Dorsolateral prefrontal cortex (tissue), 120 donors: ENCODE measurements at regions of chr6 and their contacts with region 1.

Region 1: GRCh38 chr6:98845211-98846020 is 11.0 kb downstream of the POU3F2 start:
- DNase-seq: peak; percentile 75 to 96 (median 90)
- H3K4me3 ChIP-seq: peak overlapping the region; percentile 35 to 89 (median 71)
- H3K27ac ChIP-seq: peak overlapping the region; percentile 66 to 99 (median 96)
- H3K27me3 ChIP-seq: peaks cover 0 to 33% (median 0%) of the 10 kb centered on the region in 45 donors
- CTCF ChIP-seq: peak; percentile 70 to 93 (median 86)

Region 2: DNA sequence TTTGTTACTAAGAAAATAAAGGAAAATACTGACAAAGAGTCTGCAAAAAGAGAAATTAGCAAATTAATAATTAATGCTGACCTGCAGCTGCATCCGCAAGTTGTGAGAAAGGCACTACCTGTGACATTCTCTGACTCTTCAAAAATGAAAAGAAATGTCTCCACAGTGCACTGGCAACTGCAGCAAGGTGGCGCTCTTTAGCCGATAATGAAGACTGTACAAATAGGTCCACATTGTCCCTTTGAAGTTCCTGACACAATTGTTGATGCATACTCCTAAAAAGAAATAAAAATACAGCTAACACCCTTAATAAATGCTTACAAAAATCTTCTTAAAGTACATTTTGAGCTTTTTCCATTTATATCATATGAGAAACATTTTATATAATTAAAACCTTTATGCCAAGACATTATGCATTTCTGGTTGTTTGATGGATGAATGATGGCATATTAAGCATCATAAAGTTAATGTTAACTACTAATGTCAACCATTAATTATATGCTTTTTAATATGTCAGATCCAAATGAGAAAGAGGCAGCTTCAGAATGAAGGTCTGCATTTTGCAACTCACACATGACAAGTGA is 1658.9 kb before region 1 on chr6:
- intact Hi-C with region 1: loop called (anchors 5 to 10 kb)
- DNase-seq: peak; percentile 37 to 88 (median 64)
- H3K4me3 ChIP-seq: no peak overlapping the region
- H3K27ac ChIP-seq: no peak overlapping the region
- H3K27me3 ChIP-seq: no peaks in the 10 kb centered on the region
- CTCF ChIP-seq: peak; percentile 80 to 99 (median 92)

Region 3: GRCh38 chr6:97705568-97705967 is 1139.8 kb before region 1 on chr6:
- intact Hi-C with region 1: loop called (anchors 2 to 10 kb)
- DNase-seq: no peak
- H3K4me3 ChIP-seq: no peak overlapping the region
- H3K27ac ChIP-seq: no peak overlapping the region
- H3K27me3 ChIP-seq: no peaks in the 10 kb centered on the region
- CTCF ChIP-seq: peak; percentile 20 to 73 (median 54)

Region 4: GRCh38 chr6:98039869-98040607 is 805.4 kb before region 1 on chr6:
- intact Hi-C with region 1: loop called in 1 of 2 experiments (anchors 5 kb)
- DNase-seq: no peak
- H3K4me3 ChIP-seq: peak overlapping the region in 10 of 59 donors; percentile 3 to 35 (median 19)
- H3K27ac ChIP-seq: peak overlapping the region in 10 of 59 donors; percentile 4 to 50 (median 24)
- H3K27me3 ChIP-seq: peaks cover 0 to 3% (median 0%) of the 10 kb centered on the region in 45 donors
- CTCF ChIP-seq: peak in 53 of 56 donors; percentile 17 to 70 (median 49)

Region 5: DNA sequence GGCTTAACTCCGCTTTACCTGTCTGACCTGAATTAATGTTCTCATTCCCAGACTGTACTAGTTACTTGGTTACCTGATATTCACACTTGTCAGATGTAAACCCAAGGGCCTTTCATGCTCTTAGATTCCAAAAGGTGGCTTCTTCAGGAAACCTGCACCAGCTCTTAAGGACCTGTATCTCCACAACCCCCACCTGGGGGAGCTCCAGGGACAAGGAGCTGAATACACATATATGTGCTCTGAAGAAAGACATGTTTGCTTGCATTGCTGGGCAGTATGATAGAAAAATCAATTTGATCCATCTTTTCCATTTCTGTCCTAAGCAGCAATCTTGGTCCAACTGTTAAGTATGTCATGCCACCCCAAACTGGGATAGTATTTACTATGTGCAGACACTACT is 75.9 kb before region 1 on chr6:
- intact Hi-C with region 1: no loop called
- DNase-seq: peak in 3 of 10 donors; percentile 4 to 30 (median 28)
- H3K4me3 ChIP-seq: no peak overlapping the region
- H3K27ac ChIP-seq: no peak overlapping the region
- H3K27me3 ChIP-seq: no peaks in the 10 kb centered on the region
- CTCF ChIP-seq: peak in 24 of 56 donors; percentile 9 to 42 (median 20)

Region 6: GRCh38 chr6:99119109-99120031 is 274.0 kb after region 1 on chr6:
- intact Hi-C with region 1: loop called (anchors 1 to 2 kb)
- DNase-seq: peak in 1 of 10 donors; percentile 9
- H3K4me3 ChIP-seq: no peak overlapping the region
- H3K27ac ChIP-seq: no peak overlapping the region
- H3K27me3 ChIP-seq: peaks cover 0 to 4% (median 0%) of the 10 kb centered on the region in 45 donors
- CTCF ChIP-seq: peak; percentile 60 to 96 (median 79)